AG04450 (cell line): ENCODE measurements at regions of chr5 and their contacts with region 1.

Region 1: DNA sequence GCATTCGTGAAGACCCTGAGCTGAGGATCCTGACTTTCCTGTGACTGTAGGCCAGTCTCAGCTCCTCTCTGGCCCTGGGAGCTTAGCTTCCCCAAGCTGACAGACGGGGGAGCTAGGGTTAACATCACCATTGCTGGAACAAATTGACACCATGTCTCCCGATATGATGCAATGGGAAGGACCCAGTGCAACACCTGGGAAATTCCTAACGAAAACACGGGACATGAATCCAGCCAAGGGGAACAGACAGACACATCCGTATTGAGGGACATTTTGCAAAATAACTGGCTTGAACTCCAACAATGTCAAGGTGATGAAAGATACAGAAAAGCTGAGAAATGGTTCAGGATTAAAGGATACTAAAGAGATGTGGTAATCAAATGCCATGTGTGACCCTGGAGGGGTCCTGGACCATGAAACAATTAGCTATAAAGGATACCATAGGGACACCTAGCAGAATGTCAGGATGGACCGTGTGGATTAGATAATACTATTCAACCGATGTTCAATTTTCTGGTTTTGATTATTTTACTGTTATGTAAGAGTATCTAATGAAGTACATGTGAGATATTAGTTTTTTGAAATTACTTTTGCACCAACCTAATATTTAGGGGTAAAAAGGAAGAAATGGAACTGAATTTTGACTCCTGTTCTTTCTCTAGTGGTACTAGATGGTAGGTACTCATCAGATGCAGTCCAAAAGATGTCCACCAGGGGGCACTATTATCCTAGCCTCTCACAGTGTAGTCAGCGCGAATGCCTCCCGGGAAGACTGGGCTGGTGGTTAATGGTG is 52.7 kb downstream of the NDST1 start:
- DNase-seq: peak; percentile 67
- H3K4me3 ChIP-seq: no peak overlapping the region
- H3K27ac ChIP-seq: peak overlapping the region; percentile 47
- H3K27me3 ChIP-seq: no peaks in the 10 kb centered on the region
- CTCF ChIP-seq: peak; percentile 87

Region 2: DNA sequence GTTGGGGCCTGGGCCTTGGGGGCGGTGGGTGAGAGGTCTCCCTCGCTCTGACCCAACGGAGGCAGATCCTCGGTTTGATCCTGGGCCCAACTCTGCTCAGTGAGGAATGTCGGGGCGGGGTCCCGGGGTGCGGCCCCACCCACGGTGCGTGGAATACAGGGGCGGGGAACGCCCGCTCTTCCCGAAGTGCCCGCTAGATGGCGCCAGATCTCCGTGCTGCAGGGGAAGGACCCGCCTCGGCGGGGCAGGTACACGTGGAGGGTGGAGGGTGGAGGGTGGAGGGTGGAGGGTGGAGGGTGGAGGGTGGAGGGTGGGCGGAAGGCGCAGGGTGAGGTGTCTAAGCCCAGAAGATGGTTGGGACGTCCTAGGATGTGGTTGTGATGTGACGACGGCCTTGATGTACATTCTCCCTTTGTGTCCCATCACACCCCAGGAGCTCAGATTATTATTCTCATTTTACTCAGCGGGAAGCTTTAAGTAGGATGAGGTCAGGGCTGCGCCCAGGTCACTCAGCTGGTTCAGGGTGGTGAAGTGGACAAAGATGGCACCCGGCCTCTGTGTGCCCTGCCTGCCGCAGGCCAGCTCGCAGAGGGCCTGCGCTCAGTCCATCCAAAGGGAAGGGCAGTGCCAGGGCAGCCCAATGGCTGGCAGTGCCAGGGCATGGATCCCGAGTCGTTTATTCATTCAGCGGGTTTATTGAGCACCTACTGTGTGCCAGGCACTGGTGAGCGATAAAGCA is 101.6 kb before region 1 on chr5:
- CTCF ChIA-PET with region 1: interaction called, 87 read pairs
- POLR2A ChIA-PET with region 1: interaction called, 4 read pairs
- DNase-seq: no peak
- H3K4me3 ChIP-seq: peak overlapping the region; percentile 29; the same call in 1 of the 2 replicates
- H3K27ac ChIP-seq: no peak overlapping the region
- H3K27me3 ChIP-seq: no peaks in the 10 kb centered on the region
- CTCF ChIP-seq: peak; percentile 76

Region 3: GRCh38 chr5:150656191-150657132 is 95.9 kb after region 1 on chr5:
- CTCF ChIA-PET with region 1: interaction called, 130 read pairs
- POLR2A ChIA-PET with region 1: interaction called, 3 read pairs
- DNase-seq: no peak
- H3K4me3 ChIP-seq: peak overlapping the region; percentile 59
- H3K27ac ChIP-seq: no peak overlapping the region
- H3K27me3 ChIP-seq: peaks cover 4% of the 10 kb centered on the region
- CTCF ChIP-seq: peak; percentile 45

Region 4: DNA sequence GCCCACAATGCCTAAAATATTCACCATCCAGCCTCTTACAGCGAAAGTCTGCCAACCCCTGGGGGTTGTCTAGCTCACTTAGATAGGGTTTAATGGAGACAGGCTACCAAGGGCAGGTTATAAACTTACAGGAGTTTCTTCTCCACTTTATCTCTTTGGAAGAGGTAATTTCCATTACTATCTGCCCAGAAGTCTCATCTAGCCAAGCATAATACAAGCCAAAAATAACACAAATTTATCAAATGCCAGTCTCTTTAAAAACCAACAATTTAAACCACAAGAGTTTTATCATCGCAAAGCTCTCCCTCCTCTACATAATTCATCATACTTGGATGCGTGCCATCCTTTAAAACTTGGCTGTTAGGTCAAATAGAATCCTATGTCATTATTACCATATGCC is 134.0 kb after region 1 on chr5:
- CTCF ChIA-PET with region 1: interaction called, 40 read pairs
- POLR2A ChIA-PET with region 1: interaction called, 3 read pairs
- DNase-seq: no peak
- H3K4me3 ChIP-seq: no peak overlapping the region
- H3K27ac ChIP-seq: no peak overlapping the region
- H3K27me3 ChIP-seq: no peaks in the 10 kb centered on the region
- CTCF ChIP-seq: no peak

Region 5: DNA sequence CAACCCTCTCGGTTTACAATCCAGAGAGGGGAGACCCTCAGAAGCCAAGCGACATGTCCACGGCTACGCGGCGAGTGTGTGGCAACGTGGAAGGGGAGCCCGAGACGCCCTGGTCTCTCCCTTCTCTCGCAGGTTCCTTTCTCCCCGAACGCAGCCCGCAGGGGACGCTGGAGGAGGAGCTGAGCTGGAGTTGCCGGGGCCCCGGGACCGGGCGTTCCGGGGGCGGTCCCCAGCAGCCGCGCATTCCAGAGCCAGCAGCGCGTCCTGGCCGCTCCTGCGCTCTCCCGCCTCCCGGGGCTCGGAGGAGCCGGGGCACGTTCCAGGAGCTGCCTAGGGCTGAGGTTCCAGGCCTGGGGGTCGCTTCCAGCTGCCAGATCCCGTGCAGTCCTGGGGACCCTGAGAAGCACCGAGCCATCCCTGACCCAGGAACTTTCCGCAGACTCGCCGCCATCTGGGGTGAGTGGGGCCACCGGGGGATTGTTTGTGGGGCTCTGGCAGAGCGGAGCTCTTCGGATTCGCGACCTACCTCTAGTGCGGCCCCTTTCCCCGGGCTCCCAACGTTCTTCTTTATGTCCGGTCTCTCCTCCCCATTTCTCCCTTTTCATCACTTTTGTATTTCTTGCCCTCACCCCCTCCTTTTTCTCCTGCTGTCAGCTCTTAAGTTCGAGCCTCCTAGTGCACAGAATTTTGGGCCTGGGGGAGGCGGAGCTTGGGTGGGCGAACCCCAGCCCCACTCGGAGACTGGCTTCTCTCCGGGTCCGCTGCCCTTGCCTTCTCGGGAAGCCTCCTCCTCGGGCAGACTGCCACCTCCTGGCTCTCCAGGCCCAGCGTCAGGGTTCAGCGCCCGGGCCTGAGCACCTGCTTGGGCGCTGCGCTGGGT is 218.2 kb after region 1 on chr5 and contains the start of gene SMIM3:
- CTCF ChIA-PET with region 1: interaction called, 10 read pairs
- POLR2A ChIA-PET with region 1: no interaction called
- DNase-seq: no peak
- H3K4me3 ChIP-seq: peak within 1 kb of the TSS; percentile 92
- H3K27ac ChIP-seq: peak within 1 kb of the TSS; percentile 78
- H3K27me3 ChIP-seq: no peaks in the 10 kb centered on the region
- CTCF ChIP-seq: peak; percentile 50
- polyA plus RNA-seq, gene SMIM3: 34.3 and 36.3 TPM in 2 replicates